HEK293 (cell line): ENCODE measurements at regions of chr17 and their contacts with region 1.

Region 1: GRCh38 chr17:76121932-76122430 is 18.4 kb upstream of the EXOC7 start:
- H3K4me3 ChIP-seq: no peak overlapping the region
- H3K27ac ChIP-seq: no peak overlapping the region
- H3K4me1 ChIP-seq: no peaks in the 10 kb centered on the region
- CTCF ChIP-seq: no peak

Region 2: DNA sequence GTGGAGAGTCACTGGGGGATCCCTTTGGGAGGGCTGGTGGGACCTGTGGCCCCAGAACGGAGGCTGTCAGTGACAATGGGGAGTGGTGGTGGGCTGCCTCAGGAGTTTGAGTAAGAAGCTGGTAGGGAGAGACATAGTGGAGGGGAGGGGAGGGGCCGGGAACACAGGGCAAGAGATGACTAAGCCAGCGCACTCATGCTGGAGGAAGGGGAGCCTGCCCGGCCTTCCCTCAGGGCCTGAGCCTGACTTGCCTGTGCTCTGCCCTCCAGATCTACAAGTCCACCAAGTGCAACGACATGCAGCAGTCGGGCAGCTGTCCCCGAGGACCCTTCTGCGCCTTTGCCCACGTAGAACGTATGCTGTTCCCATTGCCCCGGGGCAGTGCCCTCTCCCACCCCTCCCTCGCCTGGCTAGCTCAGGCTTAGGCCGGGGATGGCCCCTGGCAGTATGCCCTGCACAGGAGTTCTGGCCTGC is 307.0 kb before region 1 on chr17:
- CTCF ChIA-PET with region 1: no interaction called
- POLR2A ChIA-PET with region 1: no interaction called
- H3K4me3 ChIP-seq: no peak overlapping the region
- H3K27ac ChIP-seq: no peak overlapping the region
- H3K4me1 ChIP-seq: no peaks in the 10 kb centered on the region
- CTCF ChIP-seq: no peak

Region 3: GRCh38 chr17:76103274-76104139 is 18.5 kb before region 1 on chr17 and contains the start of gene EXOC7:
- CTCF ChIA-PET with region 1: interaction called, 11 read pairs
- POLR2A ChIA-PET with region 1: no interaction called
- H3K4me3 ChIP-seq: peak within 1 kb of the TSS; percentile 71
- H3K27ac ChIP-seq: peak within 1 kb of the TSS; percentile 83
- H3K4me1 ChIP-seq: 0 out of 2 replicates have a peak, but pooled peaks cover 4% of the 10 kb centered on the region
- CTCF ChIP-seq: peak; percentile 26; the same call in 1 of the 2 replicates

Region 4: DNA sequence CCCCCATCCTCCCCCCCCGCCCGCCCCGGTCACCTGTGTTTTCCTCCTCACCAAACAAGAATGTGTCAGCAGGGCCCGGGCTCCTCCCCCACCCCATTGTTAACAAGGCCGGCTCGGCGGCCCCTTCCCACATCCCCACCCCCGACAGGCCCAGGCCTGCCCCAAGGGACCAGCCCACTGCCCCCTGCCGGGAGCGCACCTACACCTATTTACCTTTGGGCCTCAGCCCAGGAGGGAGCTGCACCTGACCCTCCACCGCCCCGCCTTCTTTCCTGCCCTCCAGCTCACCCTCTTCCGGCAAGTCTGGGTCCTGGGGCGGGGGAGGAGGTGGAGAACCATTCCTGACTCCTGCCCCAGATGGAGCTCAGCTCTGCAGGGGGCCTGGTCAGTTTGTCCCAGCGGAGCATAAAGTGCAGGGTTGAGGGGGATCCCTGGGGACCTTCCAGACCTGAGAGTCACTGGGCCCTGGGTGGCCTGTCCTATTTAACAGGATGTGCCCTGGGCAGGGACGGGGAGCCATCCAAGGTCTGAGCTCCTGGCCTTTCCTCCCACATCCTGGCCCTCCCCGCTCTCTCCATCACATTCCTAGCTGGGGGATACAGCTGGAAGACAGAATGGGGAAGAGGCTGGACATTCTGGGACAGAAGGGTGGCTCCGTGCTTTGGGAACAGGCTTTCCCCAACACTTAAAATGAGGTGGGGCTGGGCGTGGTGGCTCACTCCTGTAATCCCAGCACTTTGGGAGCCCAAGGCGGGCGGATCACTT is 10.8 kb after region 1 on chr17:
- CTCF ChIA-PET with region 1: interaction called, 10 read pairs
- POLR2A ChIA-PET with region 1: interaction called, 3 read pairs
- H3K4me3 ChIP-seq: no peak overlapping the region
- H3K27ac ChIP-seq: no peak overlapping the region
- H3K4me1 ChIP-seq: peaks cover 4% of the 10 kb centered on the region
- CTCF ChIP-seq: no peak

Region 5: DNA sequence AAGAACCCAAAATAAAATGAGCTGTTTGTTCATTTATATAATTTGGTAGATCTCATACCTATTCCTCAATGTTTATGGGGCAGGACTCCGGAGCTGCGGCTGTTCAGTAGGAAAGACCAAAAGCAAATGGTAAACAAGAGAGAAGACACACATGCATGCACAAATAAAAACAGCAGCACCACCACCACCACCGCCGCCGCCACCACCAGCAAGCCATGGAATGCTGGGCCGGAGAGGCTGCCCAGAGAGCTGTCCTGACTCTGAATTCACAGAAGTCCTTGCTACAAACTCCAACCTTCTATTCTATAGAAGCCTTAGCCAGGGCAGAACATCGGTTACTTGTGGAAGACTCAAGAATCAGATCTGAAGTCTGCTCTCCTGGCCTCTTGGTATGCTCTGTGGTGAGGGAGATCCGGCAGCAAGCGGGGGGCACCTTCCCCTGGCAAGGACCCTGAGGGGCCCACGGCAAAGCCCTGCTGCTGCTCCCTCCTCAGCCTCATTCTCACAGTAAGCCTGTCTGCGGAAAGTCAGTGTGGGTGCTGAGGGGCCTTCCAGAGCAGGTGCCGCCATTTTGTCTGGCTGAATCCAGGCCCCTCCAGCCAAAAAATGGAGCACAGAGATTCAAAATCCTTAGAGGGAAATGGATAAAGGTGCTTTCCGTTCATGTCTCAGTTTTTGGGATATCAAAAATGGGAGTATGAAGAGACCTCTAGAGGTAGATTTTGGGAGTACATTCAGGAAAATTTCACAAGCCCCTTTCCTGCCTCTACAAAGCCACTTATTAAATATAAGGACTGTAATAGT is 25.4 kb after region 1 on chr17:
- CTCF ChIA-PET with region 1: interaction called, 38 read pairs
- POLR2A ChIA-PET with region 1: no interaction called
- H3K4me3 ChIP-seq: no peak overlapping the region
- H3K27ac ChIP-seq: no peak overlapping the region
- H3K4me1 ChIP-seq: no peaks in the 10 kb centered on the region
- CTCF ChIP-seq: no peak

Region 6: DNA sequence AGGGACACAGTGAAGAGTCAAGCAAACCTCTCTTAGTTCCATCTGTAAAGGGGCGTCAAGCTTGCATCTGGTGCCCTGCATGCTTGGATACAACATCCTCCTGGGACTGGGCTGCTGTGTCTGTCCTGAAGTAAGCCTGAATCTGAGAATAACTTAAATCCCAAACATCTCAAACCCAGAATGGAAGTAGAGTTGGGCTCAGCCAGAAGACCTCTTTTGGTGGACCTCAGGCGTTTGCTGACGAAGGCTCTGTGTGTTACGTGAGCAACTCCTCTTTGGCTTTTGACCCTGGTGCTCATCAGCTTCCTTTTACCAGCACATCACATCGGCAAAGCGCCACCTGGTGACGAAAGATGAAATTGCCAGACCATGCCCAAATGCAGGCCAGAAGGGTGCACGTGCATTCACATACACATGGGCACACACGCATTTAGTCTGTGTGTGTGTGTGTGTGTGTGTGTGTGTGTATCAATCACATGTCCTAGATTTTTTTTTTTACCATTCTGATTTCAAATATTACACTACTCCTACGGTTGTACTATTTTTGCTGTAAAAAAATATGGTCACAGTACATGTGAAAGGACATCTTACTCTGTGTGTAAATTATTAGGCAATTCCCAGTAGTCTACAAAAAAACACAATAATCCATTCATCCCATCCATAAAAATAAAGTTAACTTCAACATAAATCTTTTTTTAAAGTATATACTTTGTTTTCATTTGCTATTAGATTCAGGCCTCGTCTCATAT is 60.2 kb after region 1 on chr17:
- CTCF ChIA-PET with region 1: interaction called, 78 read pairs
- POLR2A ChIA-PET with region 1: no interaction called
- H3K4me3 ChIP-seq: no peak overlapping the region
- H3K27ac ChIP-seq: no peak overlapping the region
- H3K4me1 ChIP-seq: no peaks in the 10 kb centered on the region
- CTCF ChIP-seq: peak; percentile 91